ENCODE measurements at regions of chr17 and their contacts with region 1.

Region 1: GRCh38 chr17:57671667-57672632 is 73.1 kb downstream of the CCDC182 start:
- DNase-seq: peak; percentile 91
- H3K4me3 ChIP-seq: no peak overlapping the region
- H3K27ac ChIP-seq: peak overlapping the region in 1 of 8 donors; percentile 9
- H3K4me1 ChIP-seq: peaks cover 4 to 27% (median 13%) of the 10 kb centered on the region in 6 donors
- H3K27me3 ChIP-seq: no peaks in the 10 kb centered on the region
- CTCF ChIP-seq: peak; percentile 80 to 94 (median 90)
- POLR2A ChIP-seq: no peak

Region 2: GRCh38 chr17:57243171-57243948 is 428.6 kb before region 1 on chr17:
- intact Hi-C with region 1: loop called (anchors 5 kb)
- DNase-seq: peak; percentile 87
- H3K4me3 ChIP-seq: no peak overlapping the region
- H3K27ac ChIP-seq: no peak overlapping the region
- H3K4me1 ChIP-seq: peaks cover 0 to 21% (median 2%) of the 10 kb centered on the region in 6 donors
- H3K27me3 ChIP-seq: no peaks in the 10 kb centered on the region
- CTCF ChIP-seq: peak; percentile 83 to 99 (median 97)
- POLR2A ChIP-seq: no peak

Region 3: GRCh38 chr17:57597531-57598453 is 74.2 kb before region 1 on chr17:
- intact Hi-C with region 1: loop called (anchors 5 kb)
- DNase-seq: no peak
- H3K4me3 ChIP-seq: no peak overlapping the region
- H3K27ac ChIP-seq: peak overlapping the region in 4 of 8 donors; percentile 6 to 70 (median 22)
- H3K4me1 ChIP-seq: peaks cover 35 to 79% (median 55%) of the 10 kb centered on the region in 6 donors
- H3K27me3 ChIP-seq: no peaks in the 10 kb centered on the region
- CTCF ChIP-seq: peak; percentile 42 to 80 (median 72)
- POLR2A ChIP-seq: no peak